ENCODE measurements at regions of chr12 and their contacts with region 1.

Region 1: GRCh38 chr12:69570545-69571399 is 14.5 kb upstream of the CCT2 start:
- DNase-seq: peak; percentile 52
- CTCF ChIP-seq: peak; percentile 70

Region 2: GRCh38 chr12:69359531-69360347 is 211.0 kb before region 1 on chr12 and contains the start of gene YEATS4:
- CTCF ChIA-PET with region 1: interaction called, 61 read pairs
- POLR2A ChIA-PET with region 1: no interaction called
- DNase-seq: peak; percentile 93
- CTCF ChIP-seq: no peak

Region 3: GRCh38 chr12:69388371-69388770 is 182.4 kb before region 1 on chr12:
- CTCF ChIA-PET with region 1: interaction called, 32 read pairs
- POLR2A ChIA-PET with region 1: no interaction called
- DNase-seq: peak; percentile 15
- CTCF ChIP-seq: peak; percentile 27

Region 4: GRCh38 chr12:69553627-69554248 is 17.0 kb before region 1 on chr12:
- CTCF ChIA-PET with region 1: interaction called, 47 read pairs
- POLR2A ChIA-PET with region 1: no interaction called
- DNase-seq: peak; percentile 13
- CTCF ChIP-seq: no peak

Region 5: DNA sequence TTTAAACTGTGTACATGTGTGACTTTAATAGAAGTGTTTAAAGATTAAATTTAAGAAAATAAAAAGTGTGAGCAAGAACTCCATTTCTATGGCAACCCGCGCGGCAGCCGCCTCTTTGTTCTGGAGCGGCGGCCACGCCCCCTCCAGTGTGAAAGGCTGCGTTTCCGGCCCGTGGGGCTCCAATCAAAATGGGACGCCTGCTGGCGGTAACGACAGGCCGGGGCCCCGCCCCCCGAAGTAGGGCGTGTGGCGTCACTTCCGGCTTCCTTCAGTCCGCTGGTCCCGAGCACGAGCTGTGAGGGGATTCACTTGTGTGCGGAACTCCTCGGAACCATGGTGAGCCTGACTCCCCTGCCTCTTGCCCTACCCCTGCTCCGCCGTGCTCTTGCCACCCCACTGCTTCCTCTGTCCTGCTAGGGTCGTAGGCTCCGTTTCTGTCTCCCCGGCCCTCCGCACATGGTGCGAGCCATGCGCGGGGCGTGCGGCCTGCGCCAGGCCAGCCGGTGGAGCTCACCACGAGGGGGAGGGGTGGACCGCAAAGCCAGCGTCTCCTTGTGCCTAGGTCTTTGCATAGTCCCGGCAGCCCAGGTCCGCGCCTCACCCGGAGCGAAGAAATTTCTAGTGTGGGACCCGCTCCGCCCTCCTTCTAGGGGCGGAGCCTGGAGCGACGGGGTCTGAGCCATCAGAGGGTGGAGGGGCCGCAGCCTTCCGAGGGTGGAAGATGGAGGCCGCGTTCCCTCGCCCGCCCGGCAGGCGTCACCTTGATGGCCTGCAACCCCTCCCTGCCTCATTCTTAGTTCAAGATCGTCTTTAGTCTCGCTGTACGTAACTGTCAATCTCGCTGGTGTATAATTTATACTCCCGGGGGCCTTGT is 14.7 kb after region 1 on chr12 and contains the start of gene CCT2:
- CTCF ChIA-PET with region 1: interaction called, 76 read pairs
- POLR2A ChIA-PET with region 1: no interaction called
- DNase-seq: peak; percentile 97
- CTCF ChIP-seq: no peak